CD8-positive, alpha-beta T cell (primary cell): ENCODE measurements at regions of chr1 and their contacts with region 1.

Region 1: GRCh38 chr1:172532700-172533509 is at the start of gene SUCO:
- DNase-seq: peak; percentile 99 to 100 (median 100)
- ATAC-seq: peak; percentile 80
- H3K4me3 ChIP-seq: peak within 1 kb of the TSS; percentile 74 to 80
- H3K4me3 Mint-ChIP-seq: peak within 1 kb of the TSS; percentile 99
- H3K27ac ChIP-seq: peak within 1 kb of the TSS; percentile 93 to 94
- H3K27ac Mint-ChIP-seq: peak within 1 kb of the TSS; percentile 100
- H3K4me1 ChIP-seq: peaks cover 34% of the 10 kb centered on the region
- H3K4me1 Mint-ChIP-seq: peaks cover 47% of the 10 kb centered on the region
- H3K27me3 ChIP-seq: no peaks in the 10 kb centered on the region
- H3K27me3 Mint-ChIP-seq: no peaks in the 10 kb centered on the region
- CTCF ChIP-seq: peak; percentile 16
- total RNA-seq, gene SUCO: 106 to 107 TPM

Region 2: DNA sequence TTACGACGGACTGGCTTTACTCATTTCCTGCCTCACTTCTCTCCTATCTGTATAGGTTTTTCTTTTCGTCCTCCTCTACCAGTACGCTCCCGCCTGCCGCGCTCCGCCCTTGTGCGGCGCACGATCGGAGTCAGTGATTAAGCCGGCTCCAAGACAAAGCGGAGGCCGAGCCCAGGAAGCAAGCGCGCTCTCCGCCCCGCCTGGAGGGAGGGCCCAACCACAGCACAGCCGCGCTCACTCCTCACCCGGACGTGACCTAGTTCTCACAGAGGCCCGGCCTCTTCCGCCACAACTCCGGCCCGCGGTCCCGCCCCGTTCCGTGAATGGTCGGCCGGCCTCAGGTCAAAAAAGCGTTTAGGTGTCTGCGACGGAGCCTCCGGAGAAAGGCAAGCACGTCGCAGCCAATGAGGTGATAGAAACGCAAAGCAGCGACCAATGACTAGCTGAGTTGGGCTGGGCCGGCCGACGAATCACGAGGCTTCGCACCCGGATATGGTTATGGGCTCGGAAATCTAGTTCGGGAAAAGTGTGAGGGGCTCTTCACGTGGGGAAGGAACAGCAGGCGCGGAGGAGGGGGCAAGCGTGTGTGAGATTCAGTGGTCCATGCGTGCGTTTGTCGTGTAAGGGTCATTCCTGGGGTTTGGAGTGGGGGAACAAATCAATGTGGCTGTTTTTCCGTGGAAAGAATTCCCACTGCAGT is 751.6 kb before region 1 on chr1 and contains the start of gene METTL13:
- CTCF ChIA-PET with region 1: no interaction called
- POLR2A ChIA-PET with region 1: interaction called, 5 read pairs
- intact Hi-C with region 1: loop called (anchors 1 kb)
- DNase-seq: peak; percentile 96 to 99 (median 98)
- ATAC-seq: peak; percentile 90
- H3K4me3 ChIP-seq: peak within 1 kb of the TSS; percentile 89 to 92
- H3K4me3 Mint-ChIP-seq: peak within 1 kb of the TSS; percentile 95
- H3K27ac ChIP-seq: peak within 1 kb of the TSS; percentile 75 to 89
- H3K27ac Mint-ChIP-seq: peak within 1 kb of the TSS; percentile 96
- H3K4me1 ChIP-seq: peaks cover 33% of the 10 kb centered on the region
- H3K4me1 Mint-ChIP-seq: peaks cover 54% of the 10 kb centered on the region
- H3K27me3 ChIP-seq: no peaks in the 10 kb centered on the region
- H3K27me3 Mint-ChIP-seq: no peaks in the 10 kb centered on the region
- CTCF ChIP-seq: no peak
- total RNA-seq, gene METTL13: 6.6 to 6.9 TPM

Region 3: GRCh38 chr1:172443626-172444453 is 89.1 kb before region 1 on chr1 and contains the start of gene PIGC:
- CTCF ChIA-PET with region 1: no interaction called
- POLR2A ChIA-PET with region 1: interaction called, 11 read pairs
- intact Hi-C with region 1: loop called (anchors 2 kb)
- DNase-seq: peak; percentile 83 to 94 (median 93)
- ATAC-seq: peak; percentile 99
- H3K4me3 ChIP-seq: peak within 1 kb of the TSS; percentile 78 to 90
- H3K4me3 Mint-ChIP-seq: peak within 1 kb of the TSS; percentile 96
- H3K27ac ChIP-seq: peak within 1 kb of the TSS; percentile 71 to 83
- H3K27ac Mint-ChIP-seq: peak within 1 kb of the TSS; percentile 95
- H3K4me1 ChIP-seq: peaks cover 25% of the 10 kb centered on the region
- H3K4me1 Mint-ChIP-seq: peaks cover 45% of the 10 kb centered on the region
- H3K27me3 ChIP-seq: no peaks in the 10 kb centered on the region
- H3K27me3 Mint-ChIP-seq: no peaks in the 10 kb centered on the region
- CTCF ChIP-seq: peak; percentile 77
- total RNA-seq, gene PIGC: 22.1 to 23.2 TPM

Region 4: DNA sequence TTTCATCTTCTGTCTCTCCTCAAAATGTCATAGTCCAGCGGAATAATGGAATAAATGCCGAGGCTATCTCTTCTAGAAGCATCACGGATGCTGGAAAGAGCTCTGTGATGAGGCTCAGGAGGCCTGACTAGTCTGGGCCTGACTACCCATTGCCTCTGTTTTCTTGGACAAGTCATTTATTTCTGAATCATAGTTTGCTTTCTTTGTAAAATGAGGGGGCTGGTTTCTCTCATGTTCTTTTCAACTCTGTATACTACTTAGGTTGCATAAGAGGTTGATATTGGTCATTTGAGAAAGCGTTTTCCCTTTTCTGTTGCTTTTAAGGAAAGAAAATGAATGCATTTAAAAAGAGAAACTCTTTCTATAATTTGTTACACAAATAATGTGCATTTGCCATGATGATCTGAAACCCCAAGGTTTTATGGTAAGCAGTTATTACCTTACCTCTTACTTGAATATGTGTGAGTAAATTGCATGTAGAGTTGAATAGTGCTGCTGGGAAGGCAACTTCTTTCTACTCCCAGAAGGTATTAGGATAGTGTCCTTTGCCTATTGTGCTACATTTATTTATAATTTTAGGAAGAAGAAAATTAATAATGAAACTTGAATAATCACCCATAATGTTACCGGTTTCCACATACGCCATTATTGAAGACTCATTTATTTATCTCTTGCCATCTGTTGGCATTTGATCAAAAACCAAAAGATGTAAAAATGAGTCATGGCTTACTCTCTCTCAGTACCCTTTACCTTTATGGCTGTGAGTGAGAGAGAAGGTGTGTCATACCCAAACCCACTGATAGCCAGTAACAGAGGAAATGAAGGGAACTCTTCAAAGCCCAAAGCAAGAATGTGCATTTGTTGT is 305.1 kb after region 1 on chr1:
- CTCF ChIA-PET with region 1: no interaction called
- POLR2A ChIA-PET with region 1: no interaction called
- intact Hi-C with region 1: loop called in 1 of 2 experiments (anchors 10 kb)
- DNase-seq: peak in 3 of 9 experiments; percentile 28 to 83 (median 73)
- ATAC-seq: peak; percentile 98
- H3K4me3 ChIP-seq: no peak overlapping the region
- H3K4me3 Mint-ChIP-seq: no peak overlapping the region
- H3K27ac ChIP-seq: no peak overlapping the region
- H3K27ac Mint-ChIP-seq: no peak overlapping the region
- H3K4me1 ChIP-seq: peaks cover 13% of the 10 kb centered on the region
- H3K4me1 Mint-ChIP-seq: peaks cover 19% of the 10 kb centered on the region
- H3K27me3 ChIP-seq: no peaks in the 10 kb centered on the region
- H3K27me3 Mint-ChIP-seq: no peaks in the 10 kb centered on the region
- CTCF ChIP-seq: no peak

Region 5: GRCh38 chr1:172990598-172991215 is 457.8 kb after region 1 on chr1:
- CTCF ChIA-PET with region 1: no interaction called
- POLR2A ChIA-PET with region 1: no interaction called
- intact Hi-C with region 1: no loop called
- DNase-seq: no peak
- ATAC-seq: no peak
- H3K4me3 ChIP-seq: no peak overlapping the region
- H3K4me3 Mint-ChIP-seq: no peak overlapping the region
- H3K27ac ChIP-seq: no peak overlapping the region
- H3K27ac Mint-ChIP-seq: no peak overlapping the region
- H3K4me1 ChIP-seq: no peaks in the 10 kb centered on the region
- H3K4me1 Mint-ChIP-seq: no peaks in the 10 kb centered on the region
- H3K27me3 ChIP-seq: no peaks in the 10 kb centered on the region
- H3K27me3 Mint-ChIP-seq: no peaks in the 10 kb centered on the region
- CTCF ChIP-seq: no peak

Region 6: GRCh38 chr1:173824331-173825081 is 1291.6 kb after region 1 on chr1 and contains the starts of genes CENPL and DARS2:
- CTCF ChIA-PET with region 1: no interaction called
- POLR2A ChIA-PET with region 1: interaction called, 3 read pairs
- intact Hi-C with region 1: loop called in 1 of 2 experiments (anchors 10 kb)
- DNase-seq: peak; percentile 79 to 97 (median 90)
- ATAC-seq: peak; percentile 86
- H3K4me3 ChIP-seq: peak within 1 kb of the TSS; percentile 92 to 97
- H3K4me3 Mint-ChIP-seq: peak within 1 kb of the TSS; percentile 93
- H3K27ac ChIP-seq: peak within 1 kb of the TSS; percentile 78 to 87
- H3K27ac Mint-ChIP-seq: peak within 1 kb of the TSS; percentile 90
- H3K4me1 ChIP-seq: peaks cover 11% of the 10 kb centered on the region
- H3K4me1 Mint-ChIP-seq: peaks cover 54% of the 10 kb centered on the region
- H3K27me3 ChIP-seq: no peaks in the 10 kb centered on the region
- H3K27me3 Mint-ChIP-seq: no peaks in the 10 kb centered on the region
- CTCF ChIP-seq: no peak
- total RNA-seq, gene CENPL: 4.0 to 5.7 TPM
- total RNA-seq, gene DARS2: 1.5 to 1.6 TPM

Region 7: DNA sequence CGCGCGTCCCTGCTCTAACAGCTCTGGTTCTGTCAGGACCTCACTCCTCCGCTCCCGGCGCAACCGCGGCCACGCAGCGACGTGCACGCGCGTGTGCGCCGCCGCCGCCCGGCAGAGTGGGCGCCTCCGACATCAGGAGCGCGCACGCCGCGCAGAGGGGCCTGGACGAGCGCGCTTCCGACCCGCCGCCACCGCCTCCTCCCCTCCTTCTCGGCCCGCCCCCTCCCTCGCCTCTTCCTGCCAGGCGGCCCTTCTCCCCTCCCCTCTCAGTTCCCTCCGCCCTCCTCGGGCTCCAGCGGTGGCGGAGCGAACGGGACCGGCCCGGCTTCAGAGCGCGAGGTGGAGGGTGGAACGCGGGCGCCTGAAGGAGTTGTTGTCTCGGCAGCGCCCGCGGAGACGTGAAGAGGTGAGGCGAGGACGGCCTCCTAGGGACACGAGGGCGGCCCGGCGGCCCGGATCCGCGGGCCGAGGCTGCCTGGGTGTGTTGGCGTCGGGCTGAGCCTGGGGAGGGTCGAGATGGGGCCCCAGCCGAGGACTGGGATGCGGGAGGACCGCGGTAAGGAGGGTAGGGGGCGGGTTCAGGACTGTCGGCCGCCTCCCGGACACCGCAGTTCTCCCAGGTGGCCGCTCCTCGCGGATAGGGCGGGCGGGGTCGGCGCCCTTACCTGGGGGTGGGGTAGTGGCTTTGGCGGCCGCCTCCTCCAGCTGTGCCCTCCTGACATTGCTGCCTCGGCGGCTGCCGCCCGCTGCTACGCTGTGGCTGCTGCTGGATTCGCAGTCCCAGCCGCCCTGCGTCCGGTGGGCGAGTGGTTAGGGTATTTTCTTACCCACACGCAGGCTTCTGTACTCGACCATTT is 1626.6 kb after region 1 on chr1 and contains the start of gene RABGAP1L:
- CTCF ChIA-PET with region 1: no interaction called
- POLR2A ChIA-PET with region 1: no interaction called
- intact Hi-C with region 1: loop called (anchors 2 kb)
- DNase-seq: peak; percentile 90 to 98 (median 93)
- ATAC-seq: peak; percentile 90
- H3K4me3 ChIP-seq: peak within 1 kb of the TSS; percentile 73 to 74
- H3K4me3 Mint-ChIP-seq: peak within 1 kb of the TSS; percentile 91
- H3K27ac ChIP-seq: peak within 1 kb of the TSS; percentile 73 to 93
- H3K27ac Mint-ChIP-seq: peak within 1 kb of the TSS; percentile 96
- H3K4me1 ChIP-seq: peaks cover 16% of the 10 kb centered on the region
- H3K4me1 Mint-ChIP-seq: peaks cover 53% of the 10 kb centered on the region
- H3K27me3 ChIP-seq: no peaks in the 10 kb centered on the region
- H3K27me3 Mint-ChIP-seq: no peaks in the 10 kb centered on the region
- CTCF ChIP-seq: no peak
- total RNA-seq, gene RABGAP1L: 60.7 to 65.1 TPM